Activated CD4-positive, alpha-beta T cell treated with anti-CD3 and anti-CD28 coated beads for 36 hours (primary cell): ENCODE measurements at regions of chr14 and their contacts with region 1.

Region 1: GRCh38 chr14:50260511-50260910 is 29.1 kb upstream of the SOS2 start:
- DNase-seq: peak; percentile 27
- ATAC-seq: peak; percentile 64
- H3K4me3 Mint-ChIP-seq: no peak overlapping the region
- H3K27ac Mint-ChIP-seq: no peak overlapping the region
- H3K4me1 Mint-ChIP-seq: no peaks in the 10 kb centered on the region
- H3K27me3 Mint-ChIP-seq: no peaks in the 10 kb centered on the region

Region 2: GRCh38 chr14:50123062-50123461 is 137.4 kb before region 1 on chr14:
- CTCF ChIA-PET with region 1: no interaction called
- POLR2A ChIA-PET with region 1: no interaction called
- intact Hi-C with region 1: loop called in 1 of 2 experiments (anchors 5 kb)
- DNase-seq: no peak
- ATAC-seq: peak; percentile 78
- H3K4me3 Mint-ChIP-seq: no peak overlapping the region
- H3K27ac Mint-ChIP-seq: no peak overlapping the region
- H3K4me1 Mint-ChIP-seq: peaks cover 3% of the 10 kb centered on the region
- H3K27me3 Mint-ChIP-seq: no peaks in the 10 kb centered on the region